Vagina (tissue), 2 donors: ENCODE measurements at regions of chr3 and their contacts with region 1.

Region 1: DNA sequence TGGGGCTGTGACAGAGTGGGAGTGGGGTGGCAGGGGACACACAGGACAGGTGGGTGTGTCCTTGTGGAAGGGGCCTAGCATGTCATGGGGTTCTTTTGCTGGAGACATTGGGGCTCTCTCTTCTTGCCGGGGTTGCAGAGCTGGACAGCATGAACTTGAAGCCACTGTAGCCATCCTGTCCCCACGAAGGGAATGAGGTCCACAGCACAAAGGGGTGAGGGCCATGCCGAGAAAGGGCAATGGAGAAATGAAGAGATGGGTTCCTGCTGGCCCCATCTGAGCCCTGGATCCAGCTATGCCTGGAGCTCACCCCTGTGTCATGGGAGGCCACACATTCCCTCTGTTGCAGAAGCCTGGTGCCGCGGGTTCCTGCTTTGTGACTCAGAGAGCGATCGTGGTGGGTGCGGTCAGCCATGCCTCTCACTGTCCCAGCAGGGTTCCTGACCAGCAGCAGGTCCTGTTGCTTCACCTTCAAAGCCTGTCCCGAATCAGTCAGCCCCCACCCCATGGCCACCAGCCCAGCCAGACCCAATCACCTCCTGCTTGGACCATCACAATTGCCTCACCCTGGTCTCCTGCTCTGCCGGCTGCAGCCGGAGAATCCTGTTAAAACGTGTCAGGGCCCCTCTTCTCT is 50.0 kb downstream of the DNAJB8 start:
- DNase-seq: no peak
- H3K4me3 ChIP-seq: no peak overlapping the region
- H3K27ac ChIP-seq: no peak overlapping the region
- H3K4me1 ChIP-seq: no peaks in the 10 kb centered on the region
- H3K27me3 ChIP-seq: no peaks in the 10 kb centered on the region
- CTCF ChIP-seq: no peak
- POLR2A ChIP-seq: no peak

Region 2: GRCh38 chr3:128503164-128503651 is 86.5 kb after region 1 on chr3:
- intact Hi-C with region 1: loop called (anchors 5 kb)
- DNase-seq: peak; percentile 74 to 81
- H3K4me3 ChIP-seq: no peak overlapping the region
- H3K27ac ChIP-seq: no peak overlapping the region
- H3K4me1 ChIP-seq: no peaks in the 10 kb centered on the region
- H3K27me3 ChIP-seq: no peaks in the 10 kb centered on the region
- CTCF ChIP-seq: no peak
- POLR2A ChIP-seq: no peak